ENCODE measurements at regions of chr13 and their contacts with region 1.

Region 1: DNA sequence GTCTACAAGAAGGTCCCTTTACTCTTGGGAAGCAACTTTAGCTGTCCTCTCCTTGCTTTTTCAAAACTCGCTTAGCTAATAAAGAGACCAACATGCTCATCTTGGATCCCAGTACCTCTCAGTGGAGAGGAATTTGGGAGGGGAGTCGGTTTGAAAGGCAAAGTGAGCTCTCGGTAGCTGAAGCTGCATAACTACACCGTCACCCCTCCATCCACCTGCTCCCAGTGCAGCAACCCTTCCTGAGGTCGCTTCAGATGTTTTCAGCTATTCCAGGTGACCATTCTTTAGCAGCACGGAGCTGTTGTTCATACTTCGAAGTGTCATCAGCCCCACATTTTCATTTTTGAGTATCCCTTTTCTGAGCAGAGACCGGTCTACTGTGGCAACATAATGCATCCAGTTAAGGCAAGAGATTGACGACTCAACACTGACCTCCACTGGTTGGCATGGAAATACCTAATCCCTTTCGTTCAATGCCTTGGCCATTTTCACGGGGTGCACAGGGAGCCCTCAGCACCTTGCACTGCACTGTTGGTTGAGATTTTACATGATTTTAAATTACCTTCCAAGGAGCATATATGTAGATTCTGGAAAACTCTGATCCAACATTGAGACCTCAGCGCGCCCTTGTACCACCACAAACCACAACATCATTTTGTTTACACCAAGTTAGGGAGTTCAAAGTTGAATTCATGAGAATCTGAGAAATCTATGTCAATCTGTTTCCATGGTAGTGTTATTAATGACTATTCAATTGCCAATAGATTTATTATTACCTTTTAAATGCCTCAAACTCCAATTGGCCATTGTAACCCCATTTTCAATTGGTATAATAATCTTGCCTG is 42.2 kb downstream of the DLEU7 start:
- DNase-seq: no peak

Region 2: GRCh38 chr13:49976314-49977258 is 824.7 kb before region 1 on chr13:
- intact Hi-C with region 1: loop called (anchors 5 kb)
- DNase-seq: peak; percentile 79

Region 3: DNA sequence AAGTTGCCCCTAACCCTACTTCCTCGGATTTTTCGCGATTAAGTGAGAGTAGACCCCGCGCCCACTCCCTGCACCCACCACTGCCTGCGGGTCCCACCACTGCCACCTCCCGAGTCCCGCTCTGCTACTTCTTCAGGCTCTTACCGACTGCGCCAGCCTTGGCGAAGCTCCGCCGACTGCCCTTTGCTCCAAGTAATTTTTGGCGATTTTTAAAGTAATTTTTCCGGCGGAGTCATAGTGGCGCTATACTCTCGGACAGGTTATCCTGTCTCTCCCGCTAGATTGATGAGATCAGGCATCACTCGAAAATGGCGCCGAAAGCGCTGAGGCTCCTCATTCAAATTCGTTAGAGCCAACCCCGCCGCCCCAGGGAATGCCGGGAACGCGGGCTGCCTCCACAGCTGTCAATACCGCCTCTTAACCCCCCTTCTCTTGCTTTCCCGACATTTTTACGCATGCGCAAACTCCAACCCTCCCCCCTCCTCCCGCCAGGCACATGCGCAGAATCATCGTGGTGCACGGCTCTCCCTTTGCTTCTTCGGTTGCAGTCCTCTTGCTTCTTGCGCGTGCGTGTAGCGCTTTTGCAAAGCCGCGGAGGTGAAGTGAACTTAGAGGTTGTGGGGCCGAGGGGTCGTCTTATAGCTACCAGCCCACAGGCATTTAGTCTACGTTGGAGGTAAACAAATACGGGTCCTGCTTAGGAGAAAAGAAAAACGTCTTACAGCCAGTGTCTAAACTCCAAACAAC is 719.5 kb before region 1 on chr13:
- intact Hi-C with region 1: loop called (anchors 5 kb)
- DNase-seq: peak; percentile 99

Region 4: GRCh38 chr13:50529154-50529882 is 272.0 kb before region 1 on chr13:
- intact Hi-C with region 1: loop called (anchors 5 kb)
- DNase-seq: peak; percentile 88

Region 5: DNA sequence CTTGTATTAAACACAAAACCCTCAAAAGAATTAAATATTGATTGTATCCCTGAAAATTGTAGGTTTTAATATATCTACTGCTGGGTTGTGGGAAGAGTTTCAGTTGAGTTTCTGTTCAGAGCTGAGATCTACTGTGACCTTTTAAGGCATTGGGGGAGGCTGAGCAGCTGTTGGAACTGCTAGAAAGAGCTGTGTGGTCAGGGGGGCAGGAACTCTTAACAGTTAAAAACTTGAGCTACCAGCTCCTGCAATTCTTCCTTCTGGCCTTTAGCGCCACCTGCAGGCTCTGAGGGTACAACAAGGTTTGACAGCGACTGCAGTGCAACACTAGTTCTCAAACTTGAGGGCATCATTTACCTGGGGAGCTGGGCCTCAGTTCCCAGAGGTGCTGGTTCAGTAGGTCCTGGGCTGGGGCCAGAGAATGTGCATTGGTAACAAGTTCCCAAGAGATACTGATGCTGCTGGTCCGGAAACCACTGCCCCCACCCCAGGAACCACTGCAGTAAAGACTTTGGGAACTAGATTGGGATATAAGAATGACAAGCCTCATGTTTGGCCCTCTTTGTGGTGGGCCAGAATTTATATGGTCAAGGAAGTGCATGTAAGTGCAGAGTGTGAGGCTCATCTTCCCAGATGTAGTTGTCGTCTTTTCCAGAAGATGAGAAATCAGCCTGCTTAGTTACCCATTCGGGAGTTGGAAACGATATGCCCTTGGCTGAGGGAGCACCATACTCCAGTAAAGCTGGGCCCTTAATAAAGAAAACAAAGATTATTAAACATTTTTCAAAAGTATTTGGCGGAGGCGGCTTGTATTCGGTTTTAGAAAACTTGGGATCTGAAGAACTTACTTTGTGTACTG is 110.9 kb after region 1 on chr13:
- intact Hi-C with region 1: loop called (anchors 5 kb)
- DNase-seq: peak; percentile 92

Measured in cardiac septum (tissue), 1 donor.